ENCODE measurements at regions of chr1 and their contacts with region 1.

Region 1: GRCh38 chr1:89804642-89805237 is 16.1 kb upstream of the LRRC8D start:
- DNase-seq: peak; percentile 81 to 82
- H3K4me3 ChIP-seq: no peak overlapping the region
- H3K27ac ChIP-seq: no peak overlapping the region
- H3K4me1 ChIP-seq: no peaks in the 10 kb centered on the region
- H3K27me3 ChIP-seq: no peaks in the 10 kb centered on the region
- CTCF ChIP-seq: peak; percentile 36 to 92 (median 88)
- POLR2A ChIP-seq: no peak

Region 2: DNA sequence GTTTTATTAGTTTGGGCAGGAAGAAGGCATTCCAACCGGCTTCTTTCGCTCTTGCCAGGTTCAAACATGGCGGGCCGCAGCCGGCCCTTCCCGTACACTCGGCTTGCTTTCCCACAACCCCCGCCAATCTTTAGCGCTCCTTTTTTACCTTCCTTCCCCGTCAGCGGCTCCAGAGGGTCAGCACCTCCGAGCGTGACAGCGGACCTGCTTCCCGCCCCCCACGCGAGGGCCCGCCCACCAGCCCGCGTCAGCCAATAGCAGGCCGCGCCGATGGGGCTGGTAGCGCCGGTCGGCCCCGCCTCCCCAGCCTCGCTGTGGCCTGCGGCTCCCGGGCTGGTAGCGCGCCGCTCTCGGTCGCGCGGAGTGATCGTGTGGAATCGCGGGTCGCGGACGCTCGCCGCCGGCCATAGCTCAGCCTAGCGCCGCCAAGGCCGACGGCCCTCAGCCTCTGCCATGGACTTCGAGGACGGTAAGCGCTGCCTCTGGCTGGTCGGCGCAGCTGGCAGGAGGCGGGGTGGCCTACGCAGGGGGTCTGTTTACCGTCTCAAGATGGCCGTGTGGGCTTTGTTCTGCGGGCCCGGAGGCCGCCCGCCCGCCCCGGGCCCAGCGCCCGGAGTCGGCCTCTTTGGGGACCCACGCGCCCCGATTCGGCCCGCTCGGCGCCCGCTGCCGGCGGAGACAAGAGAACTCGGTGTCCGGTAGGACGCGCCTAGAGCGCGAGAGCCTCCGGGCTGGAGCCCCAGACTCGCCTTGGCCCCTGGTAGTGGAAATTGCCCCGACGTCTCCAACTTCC is 190.3 kb after region 1 on chr1 and contains the start of gene ZNF326:
- intact Hi-C with region 1: loop called (anchors 5 kb)
- DNase-seq: peak; percentile 94 to 95
- H3K4me3 ChIP-seq: peak within 1 kb of the TSS; percentile 83 to 95 (median 85)
- H3K27ac ChIP-seq: peak within 1 kb of the TSS; percentile 97 to 98
- H3K4me1 ChIP-seq: no peaks in the 10 kb centered on the region
- H3K27me3 ChIP-seq: no peaks in the 10 kb centered on the region
- CTCF ChIP-seq: no peak
- POLR2A ChIP-seq: peak; percentile 93
- total RNA-seq, gene ZNF326: 21.9 to 31.3 (median 23.6) TPM